ENCODE measurements at regions of chr15 and their contacts with region 1.

Region 1: GRCh38 chr15:52256366-52256765 is 39.2 kb downstream of the MYO5C start:
- DNase-seq: peak; percentile 74 to 91
- H3K4me3 ChIP-seq: no peak overlapping the region
- H3K27ac ChIP-seq: peak overlapping the region in 2 of 5 donors; percentile 9 to 19
- H3K4me1 ChIP-seq: peaks cover 1 to 55% (median 16%) of the 10 kb centered on the region in 4 donors
- H3K27me3 ChIP-seq: no peaks in the 10 kb centered on the region
- CTCF ChIP-seq: peak in 6 of 7 experiments; percentile 45 to 85 (median 78)
- EP300 ChIP-seq: no peak
- POLR2A ChIP-seq: no peak

Region 2: GRCh38 chr15:52200831-52201365 is 55.5 kb before region 1 on chr15:
- intact Hi-C with region 1: no loop called
- DNase-seq: no peak
- H3K4me3 ChIP-seq: no peak overlapping the region
- H3K27ac ChIP-seq: no peak overlapping the region
- H3K4me1 ChIP-seq: no peaks in the 10 kb centered on the region
- H3K27me3 ChIP-seq: no peaks in the 10 kb centered on the region
- CTCF ChIP-seq: no peak
- EP300 ChIP-seq: no peak
- POLR2A ChIP-seq: no peak

Region 3: DNA sequence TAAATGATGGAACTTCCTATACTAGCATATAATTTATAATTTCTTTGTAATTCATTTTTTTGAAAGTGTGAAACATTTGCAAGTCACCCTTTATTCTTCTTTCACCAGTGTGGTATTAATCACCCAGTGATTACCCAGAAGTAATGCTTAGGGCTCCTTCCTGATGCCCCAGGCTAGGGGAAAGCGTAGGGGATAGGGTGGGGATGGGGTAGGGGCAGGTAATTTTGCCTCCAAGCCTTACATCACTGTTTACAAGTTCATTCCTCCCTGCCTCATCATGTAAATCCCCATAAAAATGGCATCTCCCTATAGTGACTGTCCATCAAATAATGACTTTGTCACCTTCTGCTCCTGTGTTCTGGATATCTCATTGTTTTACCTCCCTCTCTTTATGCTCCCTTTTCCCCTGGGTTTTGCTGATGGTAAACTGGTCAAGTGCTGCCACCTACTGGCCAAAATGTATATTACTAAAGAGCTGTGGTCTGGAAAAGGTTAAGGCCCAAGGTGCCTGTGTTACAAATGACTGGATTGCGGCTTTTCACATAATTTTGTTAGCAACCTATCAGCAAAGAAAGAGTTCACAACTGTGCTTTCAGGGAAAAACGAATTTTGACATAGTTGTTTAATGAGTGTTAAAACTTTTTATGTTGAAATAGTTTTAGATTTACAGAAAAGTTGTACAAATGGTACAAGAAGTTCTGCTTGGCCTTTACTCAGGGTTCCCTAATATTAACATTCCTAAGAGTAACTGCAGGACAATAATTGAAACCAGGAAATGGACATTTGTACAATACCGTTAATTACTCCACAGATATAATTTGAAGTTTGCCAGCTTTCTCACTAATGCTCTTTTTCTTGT is 479.1 kb after region 1 on chr15:
- intact Hi-C with region 1: loop called (anchors 10 kb)
- DNase-seq: peak; percentile 63 to 85
- H3K4me3 ChIP-seq: no peak overlapping the region
- H3K27ac ChIP-seq: no peak overlapping the region
- H3K4me1 ChIP-seq: peaks cover 0 to 16% (median 3%) of the 10 kb centered on the region in 4 donors
- H3K27me3 ChIP-seq: no peaks in the 10 kb centered on the region
- CTCF ChIP-seq: peak in 5 of 7 experiments; percentile 60 to 91 (median 84)
- EP300 ChIP-seq: no peak
- POLR2A ChIP-seq: no peak

Measured in stomach (tissue), 19 donors.